ENCODE measurements at regions of chr11 and their contacts with region 1.

Region 1: GRCh38 chr11:83241291-83241946 is 44.7 kb downstream of the CCDC90B start:
- DNase-seq: peak; percentile 51
- ATAC-seq: peak; percentile 98
- H3K4me3 ChIP-seq: no peak overlapping the region
- H3K27ac ChIP-seq: no peak overlapping the region
- H3K4me1 ChIP-seq: no peaks in the 10 kb centered on the region
- H3K27me3 ChIP-seq: no peaks in the 10 kb centered on the region
- CTCF ChIP-seq: peak; percentile 83

Region 2: DNA sequence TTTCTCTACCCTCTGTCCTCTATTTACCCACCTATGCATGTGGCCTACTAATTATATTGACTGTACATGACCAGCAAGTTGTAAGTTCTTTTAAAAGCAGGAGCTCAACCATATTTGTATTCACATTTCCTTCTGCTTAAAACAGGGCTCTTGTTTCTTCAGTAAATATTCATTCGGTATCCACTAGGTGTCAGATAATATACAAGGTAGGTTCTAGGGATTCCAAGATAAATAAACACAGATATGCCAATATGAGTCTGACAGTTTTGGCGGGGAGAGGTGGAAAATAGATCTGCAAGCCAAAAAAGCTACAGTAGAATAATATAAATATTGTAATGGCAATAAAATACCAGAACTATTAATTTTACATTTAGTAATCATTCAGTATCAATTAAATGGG is 154.4 kb before region 1 on chr11:
- CTCF ChIA-PET with region 1: no interaction called
- POLR2A ChIA-PET with region 1: interaction called, 3 read pairs
- in situ Hi-C with region 1: no loop called
- intact Hi-C with region 1: loop called (anchors 10 kb)
- DNase-seq: no peak
- ATAC-seq: peak; percentile 57
- H3K4me3 ChIP-seq: no peak overlapping the region
- H3K27ac ChIP-seq: no peak overlapping the region
- H3K4me1 ChIP-seq: peaks cover 5% of the 10 kb centered on the region; the same call in 1 of the 2 replicates
- H3K27me3 ChIP-seq: no peaks in the 10 kb centered on the region
- CTCF ChIP-seq: peak; percentile 54; the same call in 1 of the 2 replicates

Region 3: DNA sequence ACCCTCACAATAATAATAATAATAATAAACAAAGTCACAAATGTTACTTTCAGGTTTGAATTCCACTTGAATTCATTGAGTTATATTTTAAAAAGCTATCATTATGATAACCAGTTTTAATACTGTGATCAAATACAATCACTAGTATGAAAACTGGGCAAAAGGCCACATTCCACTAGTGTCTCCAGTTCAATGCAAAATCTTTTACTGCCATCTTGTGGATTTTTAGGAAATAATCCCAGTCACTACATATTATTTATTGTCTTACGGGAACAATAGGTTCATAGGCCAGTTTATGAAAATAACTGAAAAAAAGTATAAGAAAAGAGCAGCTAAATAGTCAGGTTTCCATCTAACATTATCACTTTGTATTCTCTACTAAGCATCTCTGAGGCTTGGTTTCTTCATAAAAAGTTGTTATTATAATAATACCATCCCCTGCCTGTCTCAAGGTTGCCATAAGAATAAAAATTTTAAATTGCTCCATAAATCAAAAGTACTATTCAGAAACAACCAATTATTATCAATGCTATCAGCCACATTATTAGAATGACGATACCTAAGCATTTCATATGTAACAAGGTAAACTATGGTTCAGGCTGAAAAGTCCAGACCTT is 578.6 kb after region 1 on chr11:
- CTCF ChIA-PET with region 1: no interaction called
- POLR2A ChIA-PET with region 1: no interaction called
- in situ Hi-C with region 1: no loop called
- intact Hi-C with region 1: loop called (anchors 2 kb)
- DNase-seq: peak; percentile 24
- ATAC-seq: peak; percentile 68
- H3K4me3 ChIP-seq: no peak overlapping the region
- H3K27ac ChIP-seq: no peak overlapping the region
- H3K4me1 ChIP-seq: no peaks in the 10 kb centered on the region
- H3K27me3 ChIP-seq: peaks cover 18% of the 10 kb centered on the region; the same call in 1 of the 2 replicates
- CTCF ChIP-seq: peak; percentile 73; the same call in 1 of the 2 replicates